ENCODE measurements at regions of chr16 and their contacts with region 1.

Region 1: GRCh38 chr16:55746081-55746480 is 86.8 kb downstream of the CES1 start:
- DNase-seq: no peak
- ATAC-seq: no peak
- H3K4me3 ChIP-seq: no peak overlapping the region
- H3K27ac ChIP-seq: no peak overlapping the region
- H3K4me1 ChIP-seq: no peaks in the 10 kb centered on the region
- H3K27me3 ChIP-seq: peaks cover 0 to 54% (median 20%) of the 10 kb centered on the region in 7 donors
- CTCF ChIP-seq: no peak

Region 2: DNA sequence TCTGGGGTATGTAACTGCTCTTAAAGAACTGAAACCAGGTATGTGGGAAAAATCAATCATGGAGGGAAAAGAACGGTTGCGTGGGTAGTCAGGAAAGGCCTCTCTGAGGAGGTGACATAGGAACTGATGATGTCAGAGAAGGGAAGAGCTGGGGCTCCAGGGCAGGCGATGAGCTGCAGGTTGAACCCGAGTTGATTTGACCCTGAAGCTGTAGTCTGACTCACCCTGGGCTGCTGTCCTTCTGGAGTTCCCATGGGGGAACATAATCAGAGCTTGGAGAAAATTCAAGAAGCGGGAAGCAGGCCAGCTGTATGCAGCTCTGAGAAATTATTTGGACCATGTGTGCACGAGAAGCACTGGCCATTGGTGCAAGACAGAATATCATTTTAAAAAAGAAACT is 73.6 kb before region 1 on chr16:
- intact Hi-C with region 1: no loop called
- DNase-seq: peak; percentile 24 to 58
- ATAC-seq: peak in 7 of 8 donors; percentile 74 to 93 (median 84)
- H3K4me3 ChIP-seq: no peak overlapping the region
- H3K27ac ChIP-seq: no peak overlapping the region
- H3K4me1 ChIP-seq: peaks cover 0 to 16% (median 0%) of the 10 kb centered on the region in 9 donors
- H3K27me3 ChIP-seq: no peaks in the 10 kb centered on the region
- CTCF ChIP-seq: no peak

Region 3: DNA sequence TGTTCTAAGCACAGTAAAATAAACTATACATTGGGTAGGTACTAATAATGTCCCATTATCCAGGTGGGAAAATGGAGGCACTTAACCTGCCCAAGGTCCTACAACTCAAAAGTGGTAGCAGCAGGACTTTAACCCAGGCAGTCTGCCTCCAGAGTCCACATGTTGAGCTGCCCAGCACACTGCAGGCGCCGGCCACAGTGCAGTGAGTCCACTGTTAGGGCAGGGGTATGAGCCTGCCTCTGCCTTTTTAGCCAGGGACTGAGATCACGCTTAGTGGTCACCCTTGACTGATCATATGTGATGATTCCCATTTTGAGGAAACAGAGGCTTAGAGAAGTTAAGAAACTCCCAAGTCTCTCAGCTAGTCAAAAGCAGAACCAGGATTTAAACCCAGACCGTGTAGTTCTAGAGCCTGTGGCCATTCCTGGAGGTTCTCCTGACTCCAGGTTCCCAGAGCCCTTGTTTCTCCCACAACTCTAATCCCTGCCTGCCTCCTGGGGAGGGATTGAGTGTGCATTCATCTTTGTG is 78.5 kb after region 1 on chr16:
- intact Hi-C with region 1: loop called in 1 of 10 experiments (anchors 10 kb)
- DNase-seq: no peak
- ATAC-seq: no peak
- H3K4me3 ChIP-seq: no peak overlapping the region
- H3K27ac ChIP-seq: no peak overlapping the region
- H3K4me1 ChIP-seq: no peaks in the 10 kb centered on the region
- H3K27me3 ChIP-seq: peaks cover 0 to 19% (median 0%) of the 10 kb centered on the region in 7 donors
- CTCF ChIP-seq: no peak

Measured in heart right ventricle (tissue), 16 donors.